GM12878 (cell line): ENCODE measurements at regions of chr3 and their contacts with region 1.

Region 1: GRCh38 chr3:77320514-77320913 is 280.6 kb downstream of the ROBO2 start:
- DNase-seq: no peak
- ATAC-seq: 0 out of 3 replicates have a peak, but pooled peaks have one; percentile 24
- H3K4me3 ChIP-seq: no peak overlapping the region
- H3K27ac ChIP-seq: no peak overlapping the region
- H3K4me1 ChIP-seq: no peaks in the 10 kb centered on the region
- H3K27me3 ChIP-seq: no peaks in the 10 kb centered on the region
- CTCF ChIP-seq: peak; percentile 25 to 49 (median 44); a peak in 4 of 6 replicates
- EP300 ChIP-seq: no peak
- POLR2A ChIP-seq: no peak
- RAD21 ChIP-seq: no peak

Region 2: DNA sequence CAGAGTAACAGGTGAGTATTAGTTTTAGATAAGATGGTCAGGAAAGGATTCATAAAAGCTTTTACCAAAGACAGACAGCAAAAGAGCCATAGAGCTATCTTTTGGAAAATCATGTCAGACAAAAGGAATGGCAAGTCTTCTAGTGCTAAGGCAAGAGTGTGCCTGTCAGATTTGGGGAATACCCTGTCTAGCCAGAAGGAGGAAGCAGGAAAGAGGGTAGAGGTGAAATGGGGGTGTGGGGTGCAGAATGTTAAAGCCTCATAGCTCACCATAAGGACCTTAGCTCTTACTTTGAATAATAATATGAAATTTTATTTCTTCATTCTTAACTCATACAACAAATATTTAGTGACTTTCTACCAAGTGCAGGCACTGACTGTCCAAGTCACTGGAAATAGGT is 792.7 kb before region 1 on chr3:
- CTCF ChIA-PET with region 1: no interaction called
- POLR2A ChIA-PET with region 1: no interaction called
- RAD21 ChIA-PET with region 1: no interaction called
- SMC1A ChIA-PET with region 1: no interaction called
- in situ Hi-C with region 1: no loop called
- intact Hi-C with region 1: no loop called
- DNase-seq: no peak
- ATAC-seq: no peak
- H3K4me3 ChIP-seq: no peak overlapping the region
- H3K27ac ChIP-seq: no peak overlapping the region
- H3K4me1 ChIP-seq: no peaks in the 10 kb centered on the region
- H3K27me3 ChIP-seq: no peaks in the 10 kb centered on the region
- CTCF ChIP-seq: no peak
- EP300 ChIP-seq: no peak
- POLR2A ChIP-seq: no peak
- RAD21 ChIP-seq: no peak

Region 3: GRCh38 chr3:77309460-77309859 is 11.1 kb before region 1 on chr3:
- CTCF ChIA-PET with region 1: interaction called, 20 read pairs
- POLR2A ChIA-PET with region 1: no interaction called
- RAD21 ChIA-PET with region 1: no interaction called
- SMC1A ChIA-PET with region 1: interaction called, 3 read pairs
- in situ Hi-C with region 1: no loop called
- intact Hi-C with region 1: no loop called
- DNase-seq: no peak
- ATAC-seq: no peak
- H3K4me3 ChIP-seq: no peak overlapping the region
- H3K27ac ChIP-seq: no peak overlapping the region
- H3K4me1 ChIP-seq: no peaks in the 10 kb centered on the region
- H3K27me3 ChIP-seq: no peaks in the 10 kb centered on the region
- CTCF ChIP-seq: no peak
- EP300 ChIP-seq: no peak
- POLR2A ChIP-seq: no peak
- RAD21 ChIP-seq: no peak